GM12878 (cell line): ENCODE measurements at regions of chr17 and their contacts with region 1.

Region 1: DNA sequence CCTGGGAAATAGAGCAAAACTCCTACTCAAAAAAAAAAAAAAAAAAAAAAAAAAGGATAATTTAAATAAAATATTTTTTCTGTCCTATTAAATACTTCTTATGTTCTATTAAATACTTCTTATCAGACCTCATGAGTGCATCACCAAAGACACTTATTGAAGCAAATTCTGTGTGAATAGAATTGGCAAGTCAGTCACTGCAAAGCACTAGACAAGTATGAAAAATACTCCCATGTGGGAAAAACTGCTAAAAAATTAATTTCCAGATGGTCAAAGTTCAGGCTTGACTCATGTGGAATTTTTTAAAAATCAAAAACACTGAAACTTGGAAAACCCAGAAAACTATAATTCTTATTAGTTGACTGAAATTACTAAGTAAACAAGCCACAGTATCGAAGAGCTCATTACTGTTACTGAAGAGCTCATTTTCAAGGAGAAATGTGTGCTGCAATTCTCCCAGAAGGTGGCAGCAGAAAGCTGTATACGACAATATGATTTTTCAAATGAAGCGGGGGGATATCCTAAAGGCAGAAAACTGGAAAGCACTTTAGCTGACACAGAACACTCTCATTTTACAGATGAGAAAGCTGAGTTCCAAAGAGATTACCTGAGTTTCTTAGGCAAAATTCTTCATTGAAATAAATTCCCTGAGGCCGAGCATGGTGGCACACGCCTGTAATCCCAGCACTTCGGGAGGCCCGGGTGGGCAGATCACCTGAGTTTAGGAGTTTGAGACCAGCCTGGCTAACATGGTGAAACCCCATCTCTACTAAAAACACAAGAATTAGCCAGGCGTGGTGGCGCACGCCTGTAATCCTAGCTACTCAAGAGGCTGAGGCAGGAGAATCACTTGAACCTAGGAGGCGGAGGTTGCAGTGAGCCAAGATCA is 15.9 kb upstream of the FBXO47 start:
- DNase-seq: peak; percentile 19
- ATAC-seq: peak; percentile 73
- H3K4me3 ChIP-seq: no peak overlapping the region
- H3K27ac ChIP-seq: no peak overlapping the region
- H3K4me1 ChIP-seq: no peaks in the 10 kb centered on the region
- H3K27me3 ChIP-seq: no peaks in the 10 kb centered on the region
- CTCF ChIP-seq: peak; percentile 70 to 79 (median 77)
- EP300 ChIP-seq: no peak
- POLR2A ChIP-seq: no peak
- RAD21 ChIP-seq: peak; percentile 92

Region 2: DNA sequence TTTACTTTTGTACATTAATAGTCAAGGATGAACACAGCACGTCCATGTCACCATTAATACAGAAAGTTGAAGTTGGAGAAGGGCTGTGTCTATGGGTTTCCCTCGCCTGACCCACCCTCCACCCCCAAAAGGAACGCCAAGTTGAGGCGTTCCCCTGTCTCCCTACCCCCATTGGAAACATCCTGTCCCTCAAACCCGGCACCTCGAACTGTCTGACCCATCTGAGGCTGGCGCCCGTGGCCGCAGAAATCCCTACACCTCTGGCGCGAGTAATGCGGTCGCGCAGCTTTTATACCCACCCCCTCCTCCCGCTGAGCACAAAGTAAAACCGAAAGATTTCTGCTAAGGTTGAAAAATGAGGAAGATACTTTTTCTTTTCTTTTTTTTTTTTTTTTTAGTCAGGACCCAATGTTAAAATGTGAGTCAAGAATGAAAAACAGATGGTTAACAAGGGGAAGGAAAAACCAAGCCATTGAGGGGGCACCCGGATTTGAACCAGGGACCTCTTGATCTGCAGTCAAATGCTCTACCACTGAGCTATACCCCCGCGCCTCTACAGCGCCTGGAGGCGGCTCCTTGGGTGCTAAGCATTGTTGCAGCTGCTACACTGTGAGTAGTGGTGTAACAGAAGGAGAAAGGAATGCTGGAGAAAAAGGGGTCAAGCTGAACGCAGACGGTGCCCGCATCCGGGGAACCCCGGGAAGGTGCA is 114.1 kb before region 1 on chr17:
- CTCF ChIA-PET with region 1: interaction called, 59 read pairs
- POLR2A ChIA-PET with region 1: interaction called, 5 read pairs
- RAD21 ChIA-PET with region 1: interaction called, 25 read pairs
- SMC1A ChIA-PET with region 1: interaction called, 31 read pairs
- in situ Hi-C with region 1: no loop called
- intact Hi-C with region 1: loop called (anchors 10 kb)
- DNase-seq: peak; percentile 77
- ATAC-seq: peak; percentile 62
- H3K4me3 ChIP-seq: peak overlapping the region; percentile 87
- H3K27ac ChIP-seq: peak overlapping the region; percentile 98
- H3K4me1 ChIP-seq: peaks cover 19% of the 10 kb centered on the region
- H3K27me3 ChIP-seq: no peaks in the 10 kb centered on the region
- CTCF ChIP-seq: peak; percentile 43 to 49 (median 46)
- EP300 ChIP-seq: peak in 1 of 2 experiments; percentile 46; a peak in 1 of 4 replicates
- POLR2A ChIP-seq: peak; percentile 92
- RAD21 ChIP-seq: 0 out of 2 replicates have a peak, but pooled peaks have one; percentile 16

Region 3: DNA sequence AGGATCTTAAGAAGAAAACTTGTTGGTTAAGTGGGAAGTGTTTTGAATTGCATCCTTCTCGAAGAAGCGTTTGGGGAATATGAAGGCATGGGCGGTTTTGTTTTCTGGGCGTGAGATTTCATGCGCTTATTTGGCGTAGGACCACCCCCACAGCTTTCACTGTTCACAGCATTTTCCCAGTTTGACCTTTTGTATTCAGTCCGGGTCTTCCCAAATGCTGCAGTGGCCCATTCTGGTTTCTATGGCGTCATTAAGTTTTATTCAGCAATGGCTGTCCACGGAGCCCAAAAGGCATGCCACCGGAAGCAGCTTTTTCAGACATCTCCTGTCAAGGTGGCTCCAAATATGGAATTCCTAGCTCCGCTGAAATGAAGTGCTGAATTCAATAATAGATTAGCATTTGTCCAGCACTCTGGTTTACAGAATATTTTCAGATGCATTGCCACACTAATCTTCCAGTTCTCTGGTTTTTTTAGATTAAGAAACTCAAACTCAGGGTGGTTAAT is 74.7 kb after region 1 on chr17:
- CTCF ChIA-PET with region 1: interaction called, 17 read pairs
- POLR2A ChIA-PET with region 1: interaction called, 4 read pairs
- RAD21 ChIA-PET with region 1: interaction called, 11 read pairs
- SMC1A ChIA-PET with region 1: interaction called, 7 read pairs
- in situ Hi-C with region 1: no loop called
- intact Hi-C with region 1: no loop called
- DNase-seq: no peak
- ATAC-seq: no peak
- H3K4me3 ChIP-seq: peak overlapping the region; percentile 43; the same call in 1 of the 2 replicates
- H3K27ac ChIP-seq: no peak overlapping the region
- H3K4me1 ChIP-seq: 0 out of 2 replicates have a peak, but pooled peaks cover 4% of the 10 kb centered on the region
- H3K27me3 ChIP-seq: no peaks in the 10 kb centered on the region
- CTCF ChIP-seq: no peak
- EP300 ChIP-seq: no peak
- POLR2A ChIP-seq: no peak
- RAD21 ChIP-seq: no peak

Region 4: DNA sequence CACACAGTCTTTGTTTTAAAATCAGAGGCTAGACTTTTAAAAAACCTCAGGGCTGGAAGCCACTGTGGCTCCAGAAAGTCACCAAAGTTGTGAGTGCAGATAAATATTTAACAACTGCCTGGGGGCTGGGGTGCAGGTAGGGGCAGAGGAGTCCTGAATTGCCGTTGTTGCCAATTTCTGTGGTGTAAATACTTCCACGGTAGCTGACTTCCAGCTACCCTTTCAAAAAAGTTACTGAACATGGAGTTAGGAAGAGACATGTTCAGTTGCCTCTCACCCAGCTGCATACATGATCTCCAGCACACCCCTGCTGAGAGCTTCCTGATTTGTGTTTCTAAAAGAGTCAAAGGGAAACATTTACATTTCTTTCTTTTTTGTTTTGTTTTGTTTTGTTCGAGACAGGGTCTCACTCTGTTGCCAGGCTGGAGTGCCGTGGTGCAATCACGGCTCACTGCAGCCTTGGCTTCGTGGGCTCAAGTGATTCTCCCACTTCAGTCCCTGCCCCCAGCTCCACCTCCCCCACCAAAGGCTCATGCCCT is 109.7 kb after region 1 on chr17:
- CTCF ChIA-PET with region 1: interaction called, 7 read pairs
- POLR2A ChIA-PET with region 1: no interaction called
- RAD21 ChIA-PET with region 1: interaction called, 12 read pairs
- SMC1A ChIA-PET with region 1: interaction called, 4 read pairs
- in situ Hi-C with region 1: no loop called
- intact Hi-C with region 1: no loop called
- DNase-seq: no peak
- ATAC-seq: no peak
- H3K4me3 ChIP-seq: no peak overlapping the region
- H3K27ac ChIP-seq: no peak overlapping the region
- H3K4me1 ChIP-seq: peaks cover 26% of the 10 kb centered on the region
- H3K27me3 ChIP-seq: no peaks in the 10 kb centered on the region; a peak in 1 of 4 replicates
- CTCF ChIP-seq: no peak
- EP300 ChIP-seq: no peak
- POLR2A ChIP-seq: no peak
- RAD21 ChIP-seq: no peak

Region 5: GRCh38 chr17:39164675-39165143 is 181.6 kb after region 1 on chr17:
- CTCF ChIA-PET with region 1: interaction called, 57 read pairs
- POLR2A ChIA-PET with region 1: interaction called, 4 read pairs
- RAD21 ChIA-PET with region 1: interaction called, 16 read pairs
- SMC1A ChIA-PET with region 1: interaction called, 11 read pairs
- in situ Hi-C with region 1: no loop called
- intact Hi-C with region 1: no loop called
- DNase-seq: peak; percentile 53
- ATAC-seq: peak; percentile 98
- H3K4me3 ChIP-seq: peak overlapping the region; percentile 71
- H3K27ac ChIP-seq: no peak overlapping the region
- H3K4me1 ChIP-seq: peaks cover 9% of the 10 kb centered on the region
- H3K27me3 ChIP-seq: peaks cover 0 to 2% of the 10 kb centered on the region in 2 experiments; a peak in 2 of 4 replicates
- CTCF ChIP-seq: peak; percentile 83 to 95 (median 89)
- EP300 ChIP-seq: no peak
- POLR2A ChIP-seq: no peak
- RAD21 ChIP-seq: peak; percentile 33; the same call in 1 of the 2 replicates

Region 6: GRCh38 chr17:39199820-39200069 is 216.6 kb after region 1 on chr17:
- CTCF ChIA-PET with region 1: interaction called, 6 read pairs
- POLR2A ChIA-PET with region 1: no interaction called
- RAD21 ChIA-PET with region 1: interaction called, 14 read pairs
- SMC1A ChIA-PET with region 1: interaction called, 3 read pairs
- in situ Hi-C with region 1: no loop called
- intact Hi-C with region 1: no loop called
- DNase-seq: peak; percentile 81
- ATAC-seq: peak; percentile 65
- H3K4me3 ChIP-seq: peak overlapping the region; percentile 95
- H3K27ac ChIP-seq: peak overlapping the region; percentile 100
- H3K4me1 ChIP-seq: peaks cover 27% of the 10 kb centered on the region
- H3K27me3 ChIP-seq: no peaks in the 10 kb centered on the region
- CTCF ChIP-seq: no peak
- EP300 ChIP-seq: no peak
- POLR2A ChIP-seq: no peak
- RAD21 ChIP-seq: no peak

Region 7: GRCh38 chr17:39219647-39220154 is 236.6 kb after region 1 on chr17:
- CTCF ChIA-PET with region 1: no interaction called
- POLR2A ChIA-PET with region 1: no interaction called
- RAD21 ChIA-PET with region 1: no interaction called
- SMC1A ChIA-PET with region 1: no interaction called
- in situ Hi-C with region 1: no loop called
- intact Hi-C with region 1: no loop called
- DNase-seq: no peak
- ATAC-seq: no peak
- H3K4me3 ChIP-seq: no peak overlapping the region
- H3K27ac ChIP-seq: no peak overlapping the region
- H3K4me1 ChIP-seq: no peaks in the 10 kb centered on the region
- H3K27me3 ChIP-seq: peaks cover 1 to 6% of the 10 kb centered on the region in 2 experiments; a peak in 3 of 4 replicates
- CTCF ChIP-seq: no peak
- EP300 ChIP-seq: no peak
- POLR2A ChIP-seq: no peak
- RAD21 ChIP-seq: no peak

Region 8: GRCh38 chr17:39235555-39236449 is 252.7 kb after region 1 on chr17:
- CTCF ChIA-PET with region 1: interaction called, 23 read pairs
- POLR2A ChIA-PET with region 1: no interaction called
- RAD21 ChIA-PET with region 1: interaction called, 18 read pairs
- SMC1A ChIA-PET with region 1: interaction called, 5 read pairs
- in situ Hi-C with region 1: no loop called
- intact Hi-C with region 1: no loop called
- DNase-seq: peak; percentile 24
- ATAC-seq: peak; percentile 88
- H3K4me3 ChIP-seq: no peak overlapping the region
- H3K27ac ChIP-seq: no peak overlapping the region
- H3K4me1 ChIP-seq: no peaks in the 10 kb centered on the region
- H3K27me3 ChIP-seq: no peaks in the 10 kb centered on the region; a peak in 3 of 4 replicates
- CTCF ChIP-seq: peak; percentile 63 to 95 (median 86)
- EP300 ChIP-seq: no peak
- POLR2A ChIP-seq: no peak
- RAD21 ChIP-seq: peak; percentile 31; the same call in 1 of the 2 replicates